ENCODE measurements at regions of chr15 and their contacts with region 1.

Region 1: GRCh38 chr15:40160689-40161688 is at the start of gene BUB1B:
- DNase-seq: peak; percentile 85
- ATAC-seq: peak; percentile 93
- H3K4me3 ChIP-seq: peak within 1 kb of the TSS; percentile 76 to 85
- H3K27ac ChIP-seq: peak within 1 kb of the TSS; percentile 78
- H3K4me1 ChIP-seq: peaks cover 10 to 19% of the 10 kb centered on the region in 2 experiments; a peak in 3 of 4 replicates
- H3K27me3 ChIP-seq: no peaks in the 10 kb centered on the region
- CTCF ChIP-seq: no peak
- POLR2A ChIP-seq: peak; percentile 75
- RAD21 ChIP-seq: 0 out of 2 replicates have a peak, but pooled peaks have one; percentile 2
- total RNA-seq, gene BUB1B: 92.9 TPM

Region 2: GRCh38 chr15:40044717-40045571 is 116.0 kb before region 1 on chr15:
- CTCF ChIA-PET with region 1: no interaction called
- POLR2A ChIA-PET with region 1: no interaction called
- RAD21 ChIA-PET with region 1: no interaction called
- intact Hi-C with region 1: loop called (anchors 10 kb)
- DNase-seq: peak; percentile 46
- ATAC-seq: peak; percentile 100
- H3K4me3 ChIP-seq: peak overlapping the region; percentile 14 to 21
- H3K27ac ChIP-seq: no peak overlapping the region
- H3K4me1 ChIP-seq: peaks cover 21 to 43% of the 10 kb centered on the region in 2 experiments
- H3K27me3 ChIP-seq: no peaks in the 10 kb centered on the region
- CTCF ChIP-seq: peak; percentile 84 to 97 (median 96)
- POLR2A ChIP-seq: no peak
- RAD21 ChIP-seq: peak; percentile 98

Measured in HCT116 (cell line).